ENCODE measurements at regions of chr6 and their contacts with region 1.

Region 1: DNA sequence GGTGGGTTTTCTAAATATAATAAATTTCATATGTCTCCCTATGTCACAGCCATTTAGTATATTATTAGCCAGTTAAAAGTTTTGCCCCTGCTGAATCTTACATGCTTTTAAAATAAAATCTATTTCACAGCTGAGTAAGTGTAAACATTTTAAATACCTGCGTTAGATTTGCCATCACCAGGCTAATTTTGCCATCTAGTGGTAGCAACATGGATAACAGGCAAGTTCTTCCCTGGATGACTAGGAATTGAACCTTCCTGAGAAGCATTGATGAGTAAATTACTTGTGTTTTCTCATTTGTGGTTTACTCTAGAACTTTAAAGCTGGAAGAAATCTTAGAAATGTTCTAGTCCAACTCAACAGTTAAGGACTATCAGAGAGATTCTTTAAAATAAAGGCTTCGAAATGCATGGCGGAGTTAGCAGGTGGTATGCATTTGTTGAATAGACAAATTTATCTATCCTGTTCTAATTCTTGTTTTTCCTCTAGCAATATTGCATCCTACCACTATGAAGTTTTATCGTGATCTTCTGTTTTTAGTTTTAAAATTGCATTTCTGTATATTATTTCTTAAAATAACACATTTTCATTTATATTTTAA is 2.6 kb downstream of the PRSS35 start:
- DNase-seq: no peak
- H3K4me3 ChIP-seq: no peak overlapping the region
- H3K27ac ChIP-seq: no peak overlapping the region
- H3K4me1 ChIP-seq: peaks cover 0 to 14% (median 9%) of the 10 kb centered on the region in 4 donors
- H3K27me3 ChIP-seq: peaks cover 5% of the 10 kb centered on the region
- CTCF ChIP-seq: peak; percentile 75 to 85 (median 81)
- EP300 ChIP-seq: no peak
- POLR2A ChIP-seq: no peak

Region 2: DNA sequence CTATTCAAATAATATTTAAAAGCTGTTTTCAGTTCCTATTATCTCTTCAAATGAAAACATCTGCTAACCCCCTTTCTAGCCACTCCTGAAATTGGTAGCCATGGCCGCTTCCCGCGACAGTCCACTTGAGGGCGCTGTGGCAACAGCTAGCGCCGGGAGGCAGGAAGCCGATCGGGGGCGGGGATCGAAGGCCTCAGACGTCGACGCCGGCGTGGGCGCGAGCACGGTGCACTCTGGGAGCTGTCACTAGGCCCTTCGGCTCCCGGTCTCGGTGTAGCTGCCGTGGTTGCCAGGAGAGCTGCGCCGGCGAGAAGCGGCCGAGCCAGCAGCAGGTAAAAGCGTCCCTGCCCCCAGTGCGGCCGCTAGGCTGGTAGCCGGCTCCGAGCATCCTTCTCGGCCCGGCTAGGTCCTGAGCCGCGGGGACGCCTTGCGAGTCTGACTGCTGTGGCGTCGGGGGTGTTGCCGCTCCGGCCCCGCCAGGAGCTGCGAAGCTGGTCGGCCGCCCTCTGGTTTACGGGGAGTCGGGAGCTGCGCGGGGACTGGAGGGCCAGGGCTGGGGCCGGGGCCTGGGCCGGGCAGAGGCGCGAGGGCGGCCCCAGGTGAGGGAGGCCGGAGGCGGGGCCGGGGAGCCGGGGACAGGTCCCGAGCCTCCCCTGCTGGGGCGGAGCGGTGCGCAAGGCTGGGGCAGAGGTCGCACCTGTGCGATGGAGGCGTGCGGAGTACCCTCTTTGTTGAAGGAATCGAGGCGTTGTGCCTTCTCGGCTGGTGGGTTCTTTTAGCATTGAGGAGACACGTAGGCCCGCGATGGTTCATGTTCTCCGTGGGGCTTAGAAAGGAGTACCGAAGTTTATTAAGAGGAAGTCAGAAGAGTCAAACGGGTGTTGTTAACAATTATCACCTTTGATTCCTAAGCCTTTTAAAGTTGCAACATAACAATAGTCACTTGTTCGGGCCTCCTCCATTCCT is 447.2 kb before region 1 on chr6 and contains the start of gene DOP1A:
- in situ Hi-C with region 1: loop called in 1 of 4 experiments (anchors 25 kb)
- intact Hi-C with region 1: no loop called
- DNase-seq: peak; percentile 97
- H3K4me3 ChIP-seq: peak within 1 kb of the TSS; percentile 59 to 83 (median 74)
- H3K27ac ChIP-seq: peak within 1 kb of the TSS; percentile 89 to 98 (median 92)
- H3K4me1 ChIP-seq: peaks cover 8 to 54% (median 33%) of the 10 kb centered on the region in 4 donors
- H3K27me3 ChIP-seq: no peaks in the 10 kb centered on the region
- CTCF ChIP-seq: peak; percentile 92 to 97 (median 96)
- EP300 ChIP-seq: no peak
- POLR2A ChIP-seq: peak; percentile 71
- total RNA-seq, gene DOP1A: 25.8 to 52.9 (median 40.6) TPM

Region 3: DNA sequence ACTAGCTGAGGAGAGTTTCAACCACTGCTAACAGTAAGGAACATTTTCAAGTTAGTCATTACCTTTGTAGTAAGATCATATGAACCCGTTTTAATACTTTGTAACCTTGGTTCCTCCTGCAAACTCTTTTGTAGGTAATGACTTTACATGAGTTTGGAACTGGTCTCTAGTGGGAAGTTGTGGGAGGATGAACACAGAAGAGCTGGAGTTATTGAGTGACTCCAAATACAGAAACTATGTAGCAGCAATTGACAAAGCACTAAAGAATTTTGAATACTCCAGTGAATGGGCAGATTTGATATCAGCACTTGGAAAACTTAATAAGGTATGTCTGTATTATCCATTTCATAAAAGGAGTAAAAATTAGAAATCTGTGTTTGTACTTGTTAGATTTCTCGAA is 418.2 kb before region 1 on chr6:
- in situ Hi-C with region 1: no loop called
- intact Hi-C with region 1: loop called (anchors 5 kb)
- DNase-seq: no peak
- H3K4me3 ChIP-seq: no peak overlapping the region
- H3K27ac ChIP-seq: no peak overlapping the region
- H3K4me1 ChIP-seq: peaks cover 2 to 9% (median 2%) of the 10 kb centered on the region in 4 donors
- H3K27me3 ChIP-seq: no peaks in the 10 kb centered on the region
- CTCF ChIP-seq: no peak
- EP300 ChIP-seq: no peak
- POLR2A ChIP-seq: no peak

Region 4: GRCh38 chr6:83215131-83216047 is 299.6 kb before region 1 on chr6:
- in situ Hi-C with region 1: loop called (anchors 5 to 10 kb)
- intact Hi-C with region 1: loop called (anchors 5 kb)
- DNase-seq: peak; percentile 51
- H3K4me3 ChIP-seq: no peak overlapping the region
- H3K27ac ChIP-seq: no peak overlapping the region
- H3K4me1 ChIP-seq: no peaks in the 10 kb centered on the region
- H3K27me3 ChIP-seq: no peaks in the 10 kb centered on the region
- CTCF ChIP-seq: peak; percentile 66 to 76 (median 68)
- EP300 ChIP-seq: no peak
- POLR2A ChIP-seq: no peak

Region 5: DNA sequence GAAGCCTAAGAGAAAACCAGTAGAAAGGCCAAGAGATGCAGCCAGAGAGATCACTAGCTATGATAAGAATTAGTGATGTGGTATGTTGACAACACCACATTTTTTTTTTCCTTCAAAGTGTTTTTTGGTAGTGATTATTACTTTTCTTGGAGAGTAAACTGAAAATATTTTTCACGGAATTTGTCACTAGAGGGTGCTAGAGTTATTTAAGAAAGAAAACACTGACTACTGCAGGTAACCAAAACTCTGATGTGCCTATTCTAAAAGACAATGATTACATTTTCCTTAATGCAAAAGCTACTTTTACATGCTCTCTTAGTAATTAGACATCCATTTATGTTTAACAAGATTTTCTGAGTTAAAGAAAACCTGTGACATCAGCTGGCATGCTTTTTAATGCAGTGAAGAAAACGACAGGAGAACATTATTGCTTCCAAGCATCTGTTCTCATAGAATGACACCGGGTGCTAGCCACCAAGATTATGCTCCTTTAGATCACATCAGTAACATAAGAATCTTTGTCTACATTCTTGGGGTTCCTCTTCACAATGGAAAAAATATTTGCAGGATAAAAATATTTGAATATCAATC is 293.0 kb before region 1 on chr6:
- in situ Hi-C with region 1: loop called (anchors 5 to 10 kb)
- intact Hi-C with region 1: loop called (anchors 5 kb)
- DNase-seq: no peak
- H3K4me3 ChIP-seq: no peak overlapping the region
- H3K27ac ChIP-seq: no peak overlapping the region
- H3K4me1 ChIP-seq: no peaks in the 10 kb centered on the region
- H3K27me3 ChIP-seq: no peaks in the 10 kb centered on the region
- CTCF ChIP-seq: peak; percentile 23 to 50 (median 42)
- EP300 ChIP-seq: no peak
- POLR2A ChIP-seq: no peak

Region 6: GRCh38 chr6:83417880-83418663 is 96.9 kb before region 1 on chr6:
- in situ Hi-C with region 1: loop called in 2 of 4 experiments (anchors 5 to 10 kb)
- intact Hi-C with region 1: loop called (anchors 2 kb)
- DNase-seq: no peak
- H3K4me3 ChIP-seq: no peak overlapping the region
- H3K27ac ChIP-seq: no peak overlapping the region
- H3K4me1 ChIP-seq: no peaks in the 10 kb centered on the region
- H3K27me3 ChIP-seq: no peaks in the 10 kb centered on the region
- CTCF ChIP-seq: peak; percentile 58 to 83 (median 70)
- EP300 ChIP-seq: no peak
- POLR2A ChIP-seq: no peak

Region 7: DNA sequence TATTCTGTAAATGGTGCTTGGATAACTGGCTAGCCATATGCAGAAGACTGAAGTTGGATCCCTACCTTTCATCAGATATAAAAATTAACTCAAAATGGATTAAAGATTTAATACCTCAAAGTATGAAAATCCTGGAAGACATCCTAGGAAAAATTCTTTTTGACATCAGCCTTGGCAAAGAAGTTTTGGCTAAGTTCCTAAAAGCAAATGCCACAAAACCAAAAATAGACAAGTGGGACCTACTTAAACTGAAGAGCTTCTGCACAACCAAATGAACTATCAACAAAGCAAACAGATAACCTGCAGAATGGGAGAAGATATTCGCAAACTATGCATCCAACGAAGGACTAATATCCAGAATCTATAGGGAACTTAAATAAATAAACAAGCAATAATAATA is 277.9 kb after region 1 on chr6:
- in situ Hi-C with region 1: no loop called
- intact Hi-C with region 1: no loop called
- DNase-seq: no peak
- H3K4me3 ChIP-seq: no peak overlapping the region
- H3K27ac ChIP-seq: no peak overlapping the region
- H3K4me1 ChIP-seq: no peaks in the 10 kb centered on the region
- H3K27me3 ChIP-seq: no peaks in the 10 kb centered on the region
- CTCF ChIP-seq: no peak
- EP300 ChIP-seq: no peak
- POLR2A ChIP-seq: no peak

Measured in transverse colon (tissue), 4 donors.